K562 (cell line): ENCODE measurements at regions of chr2 and their contacts with region 1.

Region 1: GRCh38 chr2:159175182-159175581 is 111.3 kb downstream of the WDSUB1 start:
- DNase-seq: peak; percentile 37 to 74 (median 53)
- ATAC-seq: peak; percentile 96
- H3K4me3 ChIP-seq: no peak overlapping the region
- H3K27ac ChIP-seq: no peak overlapping the region
- H3K4me1 ChIP-seq: no peaks in the 10 kb centered on the region; a peak in 1 of 5 replicates
- H3K27me3 ChIP-seq: peaks cover 31 to 54% of the 10 kb centered on the region in 2 experiments
- CTCF ChIP-seq: peak; percentile 54 to 72 (median 67); a peak in 5 of 6 replicates
- EP300 ChIP-seq: no peak
- POLR2A ChIP-seq: no peak
- RAD21 ChIP-seq: peak; percentile 59 to 81

Region 2: GRCh38 chr2:158578703-158579330 is 596.4 kb before region 1 on chr2:
- CTCF ChIA-PET with region 1: no interaction called
- POLR2A ChIA-PET with region 1: no interaction called
- in situ Hi-C with region 1: no loop called
- intact Hi-C with region 1: no loop called
- DNase-seq: no peak
- ATAC-seq: no peak
- H3K4me3 ChIP-seq: no peak overlapping the region
- H3K27ac ChIP-seq: no peak overlapping the region
- H3K4me1 ChIP-seq: no peaks in the 10 kb centered on the region
- H3K27me3 ChIP-seq: no peaks in the 10 kb centered on the region
- CTCF ChIP-seq: no peak
- EP300 ChIP-seq: no peak
- POLR2A ChIP-seq: no peak
- RAD21 ChIP-seq: no peak

Region 3: DNA sequence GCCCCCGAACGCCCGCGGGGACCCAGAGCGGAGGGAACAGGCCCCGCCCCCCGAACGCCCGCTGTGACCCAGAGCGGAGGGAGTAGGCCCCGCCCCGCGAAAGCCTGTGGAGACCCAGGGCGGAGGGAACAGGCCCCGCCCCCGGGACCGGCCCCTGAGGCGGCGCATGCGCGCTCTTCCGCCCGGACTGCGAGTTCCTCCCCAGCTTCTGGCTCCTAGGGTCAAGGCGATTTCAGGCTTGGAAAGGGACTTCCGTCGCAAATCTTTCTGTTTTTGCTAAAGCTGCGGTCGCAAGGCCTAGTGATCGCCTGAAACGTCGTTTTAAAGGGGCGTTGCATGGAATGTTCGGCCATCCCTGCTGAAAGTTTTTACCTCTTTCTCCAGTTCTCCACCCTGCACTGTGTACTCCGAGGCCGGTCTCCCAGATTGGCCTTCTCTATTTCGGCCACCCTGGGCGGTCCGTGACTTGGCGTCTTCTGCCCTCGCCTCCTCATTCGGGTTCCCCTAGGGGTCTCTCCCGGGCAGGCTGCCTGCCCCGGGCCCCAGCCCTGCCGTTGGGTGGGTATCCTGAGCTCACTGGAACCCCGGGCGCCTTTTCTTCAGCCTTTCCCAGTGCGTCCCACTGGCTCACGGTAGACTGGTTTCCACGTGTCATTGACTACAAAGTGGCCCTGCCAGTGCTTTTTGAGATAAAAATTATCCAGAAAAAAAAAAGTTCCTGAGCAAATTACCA is 111.7 kb after region 1 on chr2:
- CTCF ChIA-PET with region 1: no interaction called
- POLR2A ChIA-PET with region 1: no interaction called
- in situ Hi-C with region 1: no loop called
- intact Hi-C with region 1: no loop called
- DNase-seq: peak; percentile 99 to 100 (median 100)
- ATAC-seq: peak; percentile 96
- H3K4me3 ChIP-seq: peak overlapping the region; percentile 75
- H3K27ac ChIP-seq: peak overlapping the region; percentile 90
- H3K4me1 ChIP-seq: peaks cover 22 to 23% of the 10 kb centered on the region in 2 experiments
- H3K27me3 ChIP-seq: no peaks in the 10 kb centered on the region
- CTCF ChIP-seq: no peak
- EP300 ChIP-seq: no peak
- POLR2A ChIP-seq: peak; percentile 96
- RAD21 ChIP-seq: peak in 1 of 2 experiments; percentile 13; a peak in 1 of 4 replicates

Region 4: GRCh38 chr2:159939946-159940345 is 764.8 kb after region 1 on chr2:
- CTCF ChIA-PET with region 1: no interaction called
- POLR2A ChIA-PET with region 1: no interaction called
- in situ Hi-C with region 1: no loop called
- intact Hi-C with region 1: loop called (anchors 10 kb)
- DNase-seq: peak in 2 of 4 experiments; percentile 8 to 12
- ATAC-seq: peak; percentile 49; the same call in 1 of the 3 replicates
- H3K4me3 ChIP-seq: no peak overlapping the region
- H3K27ac ChIP-seq: no peak overlapping the region
- H3K4me1 ChIP-seq: no peaks in the 10 kb centered on the region
- H3K27me3 ChIP-seq: no peaks in the 10 kb centered on the region
- CTCF ChIP-seq: peak in 1 of 3 experiments; percentile 48; a peak in 2 of 6 replicates
- EP300 ChIP-seq: no peak
- POLR2A ChIP-seq: no peak
- RAD21 ChIP-seq: peak in 1 of 2 experiments; percentile 47; a peak in 2 of 4 replicates